ENCODE measurements at regions of chrX and their contacts with region 1.

Region 1: DNA sequence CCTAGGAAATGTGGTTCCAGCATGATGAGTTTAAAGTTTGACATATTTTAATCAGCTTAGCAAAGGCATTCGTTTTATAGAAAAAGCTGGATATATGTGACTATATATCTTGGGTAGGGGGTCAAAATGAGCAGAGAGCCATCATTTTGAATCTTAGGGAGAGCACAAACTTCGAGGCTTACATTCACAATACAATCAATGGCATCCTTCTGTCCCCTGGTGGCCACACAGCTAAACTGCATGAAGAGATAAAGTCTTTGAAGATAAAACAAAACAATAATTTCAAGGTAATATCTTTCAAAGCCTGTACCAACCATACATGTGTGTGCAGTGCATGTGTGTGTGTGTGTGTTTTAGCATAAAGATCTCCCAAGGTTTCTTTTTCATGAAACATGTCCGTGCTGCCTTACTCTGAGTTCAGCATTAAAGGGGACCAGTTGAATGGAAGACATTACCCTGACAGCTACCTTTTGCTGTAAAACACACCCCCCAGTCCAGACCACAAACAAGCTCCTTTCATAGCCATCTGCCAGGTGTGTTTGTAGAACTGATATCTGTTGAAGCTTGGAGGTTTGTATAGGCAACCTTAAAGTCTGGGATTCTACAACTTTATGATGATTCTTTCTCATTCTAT is 22.0 kb downstream of the DYNLT3 start:
- DNase-seq: no peak
- H3K4me3 ChIP-seq: no peak overlapping the region
- CTCF ChIP-seq: peak; percentile 55

Region 2: DNA sequence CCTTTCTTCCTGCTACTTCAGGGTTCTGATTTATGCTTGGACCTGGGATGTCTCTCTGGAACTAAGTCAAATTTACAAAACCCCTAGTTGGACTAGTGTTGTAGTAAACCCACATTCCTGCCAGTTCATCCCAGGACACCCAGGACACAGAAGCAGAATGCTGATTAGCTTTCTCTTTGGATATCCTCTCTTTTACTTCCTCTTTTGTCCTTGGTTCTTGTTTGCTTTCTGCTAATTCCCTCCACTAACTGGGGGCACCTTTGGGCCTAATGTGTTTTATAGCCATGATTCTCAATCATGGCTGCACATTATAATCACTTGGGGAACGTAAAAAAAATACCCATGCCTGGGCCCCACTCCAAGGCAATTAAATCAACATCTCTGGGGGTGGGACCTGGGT is 211.4 kb before region 1 on chrX:
- CTCF ChIA-PET with region 1: no interaction called
- POLR2A ChIA-PET with region 1: no interaction called
- DNase-seq: no peak
- H3K4me3 ChIP-seq: no peak overlapping the region
- CTCF ChIP-seq: no peak

Region 3: DNA sequence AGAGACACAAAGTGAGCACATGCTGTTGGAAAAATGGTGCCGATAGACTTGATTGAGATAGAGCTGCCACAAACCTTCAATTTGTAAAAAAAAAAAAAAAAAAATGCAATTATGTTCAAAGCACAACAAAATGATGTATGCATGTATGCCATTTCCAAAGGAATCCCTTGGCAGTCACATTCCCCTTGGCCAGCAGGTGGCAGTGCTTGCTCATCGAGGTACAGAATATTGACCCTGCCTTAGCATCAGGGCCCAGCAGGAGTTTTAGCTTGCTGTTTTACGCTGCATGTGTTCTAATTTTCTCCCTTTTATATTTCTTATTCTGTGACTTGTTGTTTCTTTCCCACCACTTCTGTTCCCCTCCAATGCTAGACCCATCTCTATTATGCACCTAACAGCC is 80.0 kb before region 1 on chrX:
- CTCF ChIA-PET with region 1: interaction called, 44 read pairs
- POLR2A ChIA-PET with region 1: no interaction called
- DNase-seq: peak; percentile 5
- H3K4me3 ChIP-seq: no peak overlapping the region
- CTCF ChIP-seq: peak; percentile 81

Region 4: DNA sequence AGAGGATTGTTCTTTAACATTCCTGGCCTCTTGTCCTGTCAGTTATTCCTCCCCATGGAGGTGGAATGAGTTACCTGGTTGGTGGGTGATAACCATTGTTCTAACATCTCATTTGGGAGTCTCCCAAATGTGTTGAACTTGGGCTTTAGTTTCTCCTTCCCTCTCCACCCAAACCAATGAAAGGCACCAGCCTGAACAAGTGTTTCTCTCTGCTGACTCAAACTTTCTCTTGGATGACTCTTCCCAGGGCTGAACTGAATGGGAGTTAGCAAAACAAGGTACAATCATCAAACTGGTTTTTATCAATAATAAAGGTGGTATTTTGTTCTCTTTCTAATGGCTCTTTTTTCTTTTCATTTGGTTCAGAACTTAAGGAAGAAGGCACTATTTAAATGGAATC is 19.3 kb after region 1 on chrX:
- CTCF ChIA-PET with region 1: interaction called, 19 read pairs
- POLR2A ChIA-PET with region 1: no interaction called
- DNase-seq: no peak
- H3K4me3 ChIP-seq: no peak overlapping the region
- CTCF ChIP-seq: no peak